HepG2 (cell line): ENCODE measurements at regions of chr6 and their contacts with region 1.

Region 1: GRCh38 chr6:142112451-142113061 is 20.2 kb upstream of the GJE1 start:
- DNase-seq: peak; percentile 72
- ATAC-seq: peak; percentile 56; the same call in 2 of the 3 replicates
- H3K4me3 ChIP-seq: no peak overlapping the region
- H3K27ac ChIP-seq: no peak overlapping the region
- H3K4me1 ChIP-seq: no peaks in the 10 kb centered on the region
- H3K27me3 ChIP-seq: no peaks in the 10 kb centered on the region
- CTCF ChIP-seq: peak; percentile 86
- EP300 ChIP-seq: no peak
- POLR2A ChIP-seq: no peak
- RAD21 ChIP-seq: peak; percentile 51; the same call in 1 of the 2 replicates

Region 2: DNA sequence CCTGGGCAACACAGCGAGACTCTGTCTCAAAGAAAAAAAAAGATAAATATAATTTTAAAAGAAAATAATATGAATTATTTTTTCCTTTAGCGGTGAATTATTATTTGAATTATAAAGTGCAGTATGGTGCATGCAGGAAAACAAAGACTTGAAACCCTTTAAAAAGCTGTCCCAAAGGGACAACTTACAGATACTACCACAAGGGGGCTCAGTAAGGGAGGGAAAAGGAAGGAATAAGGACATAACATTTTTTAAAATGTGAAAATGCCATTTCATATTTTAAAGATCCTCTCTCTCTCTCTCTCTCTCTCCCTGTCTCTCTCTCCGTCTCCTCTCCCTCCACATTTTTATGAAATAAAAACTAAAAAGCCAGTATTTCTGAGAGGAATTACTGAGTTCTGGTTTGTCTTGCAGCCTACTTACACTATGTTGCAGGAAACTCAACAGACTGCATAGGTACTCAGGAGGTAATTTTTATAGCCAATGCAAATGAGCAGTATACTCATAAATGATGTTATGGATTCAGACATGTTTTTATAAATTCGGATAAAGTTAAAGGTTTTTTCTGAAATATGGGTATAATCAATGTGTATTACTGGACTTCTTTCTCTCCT is 434.9 kb before region 1 on chr6:
- CTCF ChIA-PET with region 1: interaction called, 16 read pairs
- POLR2A ChIA-PET with region 1: no interaction called
- in situ Hi-C with region 1: loop called (anchors 5 kb)
- intact Hi-C with region 1: loop called (anchors 1 kb)
- DNase-seq: peak; percentile 43
- ATAC-seq: peak; percentile 85
- H3K4me3 ChIP-seq: no peak overlapping the region
- H3K27ac ChIP-seq: no peak overlapping the region
- H3K4me1 ChIP-seq: no peaks in the 10 kb centered on the region
- H3K27me3 ChIP-seq: no peaks in the 10 kb centered on the region; a peak in 1 of 5 replicates
- CTCF ChIP-seq: peak; percentile 63
- EP300 ChIP-seq: no peak
- POLR2A ChIP-seq: no peak
- RAD21 ChIP-seq: no peak

Region 3: GRCh38 chr6:141988954-141989705 is 123.4 kb before region 1 on chr6:
- CTCF ChIA-PET with region 1: interaction called, 30 read pairs
- POLR2A ChIA-PET with region 1: no interaction called
- in situ Hi-C with region 1: loop called (anchors 10 kb)
- intact Hi-C with region 1: loop called (anchors 1 kb)
- DNase-seq: peak; percentile 65
- ATAC-seq: peak; percentile 92
- H3K4me3 ChIP-seq: no peak overlapping the region
- H3K27ac ChIP-seq: no peak overlapping the region
- H3K4me1 ChIP-seq: no peaks in the 10 kb centered on the region
- H3K27me3 ChIP-seq: no peaks in the 10 kb centered on the region
- CTCF ChIP-seq: peak; percentile 74
- EP300 ChIP-seq: no peak
- POLR2A ChIP-seq: no peak
- RAD21 ChIP-seq: peak; percentile 49; the same call in 1 of the 2 replicates